ENCODE measurements at regions of chr7 and their contacts with region 1.

Region 1: DNA sequence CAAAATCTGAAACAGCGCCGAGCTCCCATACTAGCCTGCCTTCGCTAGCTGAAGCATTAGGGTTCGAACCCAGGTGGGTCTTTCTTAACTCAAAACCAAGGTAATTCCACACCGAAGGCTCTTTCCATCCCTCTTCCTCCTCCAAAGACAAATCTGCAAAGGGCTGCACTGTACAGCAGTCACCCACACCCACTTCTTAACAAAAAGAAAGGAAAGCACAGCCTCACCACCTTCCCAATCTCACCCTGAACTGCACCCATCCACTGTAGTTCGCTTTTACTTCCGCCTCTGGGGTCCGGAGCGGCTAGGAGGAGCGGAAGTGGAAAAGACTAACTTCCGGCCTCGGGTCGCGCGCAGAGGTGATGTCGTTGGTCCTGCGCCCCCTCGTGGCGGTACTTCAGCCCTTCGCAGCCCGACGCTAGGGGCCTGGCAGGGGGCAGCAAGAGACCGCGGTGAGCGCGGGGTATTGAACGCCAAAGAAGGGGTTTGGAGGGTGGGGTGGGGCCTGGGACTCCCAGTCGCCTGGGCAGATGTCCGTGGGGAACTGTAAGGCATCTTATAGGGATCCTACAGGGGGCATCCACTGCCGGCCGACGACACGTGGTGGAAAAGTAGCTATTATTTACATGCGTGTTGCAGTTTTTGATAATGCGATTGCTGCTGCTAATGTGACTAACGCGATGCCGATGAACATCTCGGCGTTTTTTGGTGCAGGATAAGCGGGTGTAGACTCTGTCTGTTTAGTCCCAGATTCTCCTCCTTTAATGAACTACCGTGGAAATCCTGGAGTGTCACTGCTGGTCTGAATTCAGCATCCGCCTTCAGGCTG is at the start of gene MTERF1:
- DNase-seq: peak; percentile 34
- H3K4me3 ChIP-seq: peak within 1 kb of the TSS; percentile 95
- CTCF ChIP-seq: peak; percentile 99

Region 2: DNA sequence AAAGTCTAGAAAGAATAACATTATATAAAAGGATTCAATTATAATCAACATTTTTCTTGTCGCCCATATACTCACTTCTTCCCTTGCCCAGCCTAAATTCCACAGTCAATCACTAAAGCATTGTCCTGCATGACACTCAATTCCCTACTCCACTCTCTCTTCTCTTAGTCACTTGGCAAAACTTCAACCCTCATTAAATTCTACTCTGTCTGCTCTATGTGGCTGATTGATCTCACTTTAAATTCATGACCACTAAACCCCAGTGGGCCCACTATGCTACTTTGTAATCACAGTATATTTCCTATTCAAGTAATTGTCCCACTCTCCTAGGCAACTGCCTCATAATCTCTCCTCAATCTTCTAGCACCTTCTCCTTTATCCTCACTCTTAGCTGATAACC is 54.2 kb before region 1 on chr7:
- CTCF ChIA-PET with region 1: interaction called, 41 read pairs
- POLR2A ChIA-PET with region 1: interaction called, 3 read pairs
- DNase-seq: no peak
- H3K4me3 ChIP-seq: no peak overlapping the region
- CTCF ChIP-seq: no peak

Region 3: GRCh38 chr7:91835846-91836368 is 44.7 kb before region 1 on chr7:
- CTCF ChIA-PET with region 1: interaction called, 15 read pairs
- POLR2A ChIA-PET with region 1: no interaction called
- DNase-seq: no peak
- H3K4me3 ChIP-seq: no peak overlapping the region
- CTCF ChIP-seq: no peak

Region 4: DNA sequence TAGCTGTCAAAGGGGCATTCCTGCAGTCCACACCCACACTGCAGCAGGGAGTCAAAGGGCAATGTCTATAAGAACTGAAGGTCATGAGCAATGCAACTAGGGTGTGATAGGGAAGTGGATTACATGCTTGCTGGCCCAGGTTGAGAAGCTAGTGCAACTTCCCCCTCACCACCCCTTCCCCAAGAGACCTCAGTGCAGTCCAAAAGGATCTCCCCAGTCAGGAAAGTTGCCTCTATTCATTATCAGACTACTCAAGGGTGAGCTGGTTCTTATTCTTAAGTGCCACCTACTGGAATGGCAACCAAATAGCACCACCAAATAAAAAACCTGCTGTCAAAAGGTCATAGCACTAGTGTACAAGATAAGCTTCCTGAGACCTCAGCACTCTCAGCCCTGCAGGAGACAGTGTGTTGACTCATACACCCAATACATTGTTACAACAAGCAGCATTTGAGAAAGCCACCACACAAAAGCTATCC is 28.3 kb before region 1 on chr7:
- CTCF ChIA-PET with region 1: interaction called, 10 read pairs
- POLR2A ChIA-PET with region 1: no interaction called
- DNase-seq: no peak
- H3K4me3 ChIP-seq: no peak overlapping the region
- CTCF ChIP-seq: no peak

Region 5: DNA sequence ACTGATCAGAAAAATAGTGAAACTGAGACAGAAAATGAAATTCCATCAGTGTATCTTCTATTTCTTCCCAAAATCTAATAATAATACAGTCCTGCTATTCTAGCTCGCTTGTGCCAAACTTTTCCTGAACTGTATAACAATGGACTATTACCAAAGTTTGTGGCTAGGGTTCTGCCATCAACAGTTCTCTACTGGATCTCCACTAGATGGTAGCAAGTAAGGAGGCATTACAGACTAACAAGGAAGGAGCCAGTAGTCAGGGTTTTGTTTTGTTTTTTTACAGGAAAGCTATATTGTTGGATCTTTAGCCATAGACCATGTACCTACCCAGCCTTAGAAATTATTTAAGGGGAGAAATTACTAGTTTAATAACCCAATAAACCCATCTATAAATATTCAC is 11.0 kb before region 1 on chr7:
- CTCF ChIA-PET with region 1: interaction called, 68 read pairs
- POLR2A ChIA-PET with region 1: no interaction called
- DNase-seq: no peak
- H3K4me3 ChIP-seq: no peak overlapping the region
- CTCF ChIP-seq: no peak

Region 6: GRCh38 chr7:91892821-91893340 is 12.3 kb after region 1 on chr7:
- CTCF ChIA-PET with region 1: interaction called, 49 read pairs
- POLR2A ChIA-PET with region 1: interaction called, 3 read pairs
- DNase-seq: no peak
- H3K4me3 ChIP-seq: no peak overlapping the region
- CTCF ChIP-seq: no peak

Region 7: DNA sequence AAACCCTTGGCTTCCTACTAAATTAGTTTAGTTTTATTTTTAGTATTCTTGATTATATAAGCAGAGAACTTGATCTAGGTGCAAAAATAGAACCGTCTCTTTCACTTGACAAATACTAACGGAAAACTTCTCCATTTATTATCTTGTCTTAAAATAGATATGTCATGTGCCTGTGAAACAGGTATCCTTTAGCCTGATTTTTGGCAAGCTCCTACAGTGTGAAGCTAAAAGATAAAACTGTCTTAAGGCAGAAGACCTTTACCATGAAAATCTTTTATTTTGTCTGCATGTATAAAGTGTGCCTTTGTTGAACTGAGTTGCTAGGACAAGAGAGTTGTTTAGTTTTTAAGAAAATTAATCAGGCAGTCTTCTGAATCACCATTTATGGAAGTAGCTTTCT is 163.0 kb after region 1 on chr7:
- CTCF ChIA-PET with region 1: interaction called, 13 read pairs
- POLR2A ChIA-PET with region 1: no interaction called
- DNase-seq: no peak
- H3K4me3 ChIP-seq: no peak overlapping the region
- CTCF ChIP-seq: no peak

Measured in AG04449 (cell line).